ENCODE measurements at regions of chr5 and their contacts with region 1.

Region 1: DNA sequence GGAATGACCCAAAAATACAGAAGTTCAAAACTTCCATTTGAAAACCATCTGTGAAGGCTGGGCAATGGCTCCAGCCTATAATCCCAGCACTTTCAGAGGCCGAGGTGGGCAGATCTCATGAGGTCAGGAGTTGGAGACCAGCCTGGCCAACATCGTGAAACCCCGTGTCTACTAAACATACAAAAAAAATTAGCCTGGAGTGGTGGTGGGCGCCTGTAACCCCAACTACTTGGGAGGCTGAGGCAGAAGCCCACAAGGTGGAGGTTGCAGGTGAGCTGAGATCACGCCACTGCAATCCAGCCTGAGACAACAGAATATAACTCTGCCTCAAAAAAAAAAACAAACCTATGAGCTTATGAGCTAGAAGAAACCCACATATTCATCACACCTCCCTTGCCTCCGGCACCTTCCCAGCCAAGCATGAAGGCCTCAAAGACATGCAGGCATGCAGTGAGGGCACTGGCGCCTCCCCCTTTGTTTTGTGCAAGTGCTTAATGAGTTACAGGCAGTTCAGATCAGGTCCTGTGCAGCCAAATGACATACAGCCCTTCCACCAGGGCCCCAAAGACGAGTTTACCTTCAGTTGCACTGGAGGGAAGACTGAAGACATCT is 9.9 kb downstream of the HNRNPH1 start:
- DNase-seq: peak; percentile 49
- H3K4me3 ChIP-seq: no peak overlapping the region
- H3K27ac ChIP-seq: no peak overlapping the region
- H3K4me1 ChIP-seq: peaks cover 21 to 95% (median 61%) of the 10 kb centered on the region in 6 donors
- H3K27me3 ChIP-seq: no peaks in the 10 kb centered on the region
- CTCF ChIP-seq: no peak
- POLR2A ChIP-seq: no peak

Region 2: GRCh38 chr5:179559284-179560252 is 54.0 kb before region 1 on chr5:
- intact Hi-C with region 1: loop called (anchors 10 kb)
- DNase-seq: peak; percentile 98
- H3K4me3 ChIP-seq: peak overlapping the region; percentile 41 to 83 (median 50)
- H3K27ac ChIP-seq: peak overlapping the region; percentile 77 to 93 (median 86)
- H3K4me1 ChIP-seq: peaks cover 10 to 50% (median 27%) of the 10 kb centered on the region in 6 donors
- H3K27me3 ChIP-seq: no peaks in the 10 kb centered on the region
- CTCF ChIP-seq: peak in 3 of 11 experiments; percentile 19 to 45 (median 23)
- POLR2A ChIP-seq: peak; percentile 1 to 67 (median 22)

Region 3: DNA sequence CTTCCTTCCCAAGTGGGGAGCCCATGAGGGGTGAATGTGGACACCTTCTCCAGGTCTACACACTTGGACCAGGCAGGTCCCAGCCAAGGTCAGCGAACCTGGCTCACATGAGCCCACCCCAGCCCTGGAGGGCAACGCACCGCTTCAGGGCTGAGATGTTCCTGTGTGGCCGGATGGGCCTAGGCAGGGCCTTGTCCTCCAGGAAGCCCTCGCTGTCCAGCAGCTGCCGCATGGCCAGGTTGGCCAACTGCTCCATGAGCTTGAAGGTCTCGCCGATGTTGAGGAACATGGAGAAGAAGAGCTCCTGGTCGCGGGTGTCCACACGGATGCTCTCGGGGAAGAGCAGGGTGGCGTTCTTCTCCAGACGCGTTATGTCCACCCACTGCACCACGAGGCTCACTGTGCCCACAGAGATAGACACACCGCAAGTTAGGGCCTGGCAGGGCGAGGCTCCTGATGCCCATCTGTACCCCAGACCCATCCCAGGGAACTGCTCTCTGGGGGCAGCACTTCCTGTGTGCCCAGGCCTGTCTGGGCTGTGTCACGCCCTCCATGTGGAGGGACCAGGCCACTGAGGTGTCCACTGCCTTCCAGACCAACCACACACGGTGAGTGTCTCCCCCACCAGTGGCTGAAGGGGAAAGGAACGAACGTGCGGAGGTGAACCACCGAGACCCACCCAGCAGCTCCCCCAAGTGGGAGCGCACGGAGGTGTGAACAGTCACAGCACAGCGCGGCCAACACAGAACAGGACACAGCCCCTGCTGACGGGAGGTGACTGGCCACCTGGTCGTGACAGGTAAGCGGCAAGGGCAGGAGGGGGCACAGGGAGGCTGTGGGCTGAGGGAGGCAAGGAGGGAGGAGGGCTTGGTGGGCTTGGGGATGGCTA is 279.7 kb after region 1 on chr5:
- intact Hi-C with region 1: no loop called
- DNase-seq: no peak
- H3K4me3 ChIP-seq: no peak overlapping the region
- H3K27ac ChIP-seq: no peak overlapping the region
- H3K4me1 ChIP-seq: peaks cover 0 to 16% (median 8%) of the 10 kb centered on the region in 6 donors
- H3K27me3 ChIP-seq: no peaks in the 10 kb centered on the region
- CTCF ChIP-seq: no peak
- POLR2A ChIP-seq: no peak

Measured in spleen (tissue), 13 donors.